K562 (cell line): ENCODE measurements at regions of chr21 and their contacts with region 1.

Region 1: GRCh38 chr21:45973659-45974072 is 7.9 kb upstream of the COL6A1 start:
- DNase-seq: peak; percentile 72 to 83 (median 82)
- ATAC-seq: peak; percentile 76
- H3K4me3 ChIP-seq: peak overlapping the region; percentile 14
- H3K27ac ChIP-seq: no peak overlapping the region
- H3K4me1 ChIP-seq: peaks cover 0 to 52% of the 10 kb centered on the region in 2 experiments; a peak in 4 of 5 replicates
- H3K27me3 ChIP-seq: peaks cover 29 to 44% of the 10 kb centered on the region in 2 experiments
- CTCF ChIP-seq: peak; percentile 71 to 81 (median 74)
- EP300 ChIP-seq: no peak
- POLR2A ChIP-seq: no peak
- RAD21 ChIP-seq: peak; percentile 38 to 67

Region 2: DNA sequence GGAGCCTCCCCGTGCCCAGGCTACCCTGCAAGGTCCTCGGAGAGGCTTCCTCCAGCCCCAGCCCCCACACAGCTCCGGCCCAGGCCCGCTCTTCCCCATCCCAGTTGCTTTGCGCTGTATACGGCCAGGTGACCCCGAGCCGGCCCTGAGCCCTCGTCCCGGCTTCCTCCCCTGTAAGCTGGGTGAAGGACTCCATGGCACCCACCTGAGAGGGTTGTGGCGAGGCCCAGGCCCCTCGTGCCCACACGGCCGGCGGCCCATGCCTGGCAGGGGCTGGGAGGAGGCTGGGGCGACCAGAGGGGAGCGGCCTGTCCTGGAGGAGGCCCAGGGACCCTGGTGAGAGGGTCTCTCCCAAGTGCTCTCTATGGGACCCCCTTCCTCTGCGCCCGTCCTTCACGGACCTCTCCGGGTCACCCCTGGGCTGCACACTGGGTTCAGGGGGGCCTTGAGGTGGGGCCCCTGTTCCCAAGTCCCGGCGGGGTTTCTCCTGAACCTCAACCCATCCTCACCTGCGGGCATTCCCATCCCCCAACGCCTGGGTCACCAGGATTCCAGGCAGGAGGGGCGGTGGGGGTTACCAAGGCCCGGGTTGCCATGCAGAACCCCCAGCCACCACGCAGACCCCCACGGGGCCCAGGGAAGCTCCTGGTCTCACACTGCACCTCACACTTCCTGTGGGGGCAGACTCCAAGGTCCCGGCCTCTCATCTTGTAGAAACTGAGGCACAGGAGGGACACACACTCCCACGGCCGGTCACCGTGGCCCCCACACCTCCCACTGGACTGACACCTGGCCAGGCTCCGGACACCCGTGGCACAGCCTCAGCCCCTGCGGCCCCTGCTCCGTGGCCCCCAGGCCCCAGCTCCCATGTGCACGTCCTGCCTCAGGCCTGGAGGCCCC is 33.1 kb after region 1 on chr21:
- CTCF ChIA-PET with region 1: no interaction called
- POLR2A ChIA-PET with region 1: no interaction called
- in situ Hi-C with region 1: no loop called
- intact Hi-C with region 1: no loop called
- DNase-seq: no peak
- ATAC-seq: no peak
- H3K4me3 ChIP-seq: no peak overlapping the region
- H3K27ac ChIP-seq: no peak overlapping the region
- H3K4me1 ChIP-seq: peaks cover 0 to 33% of the 10 kb centered on the region in 2 experiments; a peak in 1 of 5 replicates
- H3K27me3 ChIP-seq: peaks cover 3 to 47% of the 10 kb centered on the region in 2 experiments; a peak in 3 of 5 replicates
- CTCF ChIP-seq: no peak
- EP300 ChIP-seq: no peak
- POLR2A ChIP-seq: no peak
- RAD21 ChIP-seq: no peak

Region 3: GRCh38 chr21:46048926-46049889 is 75.5 kb after region 1 on chr21:
- CTCF ChIA-PET with region 1: no interaction called
- POLR2A ChIA-PET with region 1: no interaction called
- in situ Hi-C with region 1: no loop called
- intact Hi-C with region 1: loop called (anchors 10 kb)
- DNase-seq: no peak
- ATAC-seq: 0 out of 3 replicates have a peak, but pooled peaks have one; percentile 33
- H3K4me3 ChIP-seq: no peak overlapping the region
- H3K27ac ChIP-seq: no peak overlapping the region
- H3K4me1 ChIP-seq: peaks cover 0 to 20% of the 10 kb centered on the region in 2 experiments; a peak in 1 of 5 replicates
- H3K27me3 ChIP-seq: peaks cover 8 to 38% of the 10 kb centered on the region in 2 experiments; a peak in 4 of 5 replicates
- CTCF ChIP-seq: no peak
- EP300 ChIP-seq: no peak
- POLR2A ChIP-seq: no peak
- RAD21 ChIP-seq: no peak

Region 4: DNA sequence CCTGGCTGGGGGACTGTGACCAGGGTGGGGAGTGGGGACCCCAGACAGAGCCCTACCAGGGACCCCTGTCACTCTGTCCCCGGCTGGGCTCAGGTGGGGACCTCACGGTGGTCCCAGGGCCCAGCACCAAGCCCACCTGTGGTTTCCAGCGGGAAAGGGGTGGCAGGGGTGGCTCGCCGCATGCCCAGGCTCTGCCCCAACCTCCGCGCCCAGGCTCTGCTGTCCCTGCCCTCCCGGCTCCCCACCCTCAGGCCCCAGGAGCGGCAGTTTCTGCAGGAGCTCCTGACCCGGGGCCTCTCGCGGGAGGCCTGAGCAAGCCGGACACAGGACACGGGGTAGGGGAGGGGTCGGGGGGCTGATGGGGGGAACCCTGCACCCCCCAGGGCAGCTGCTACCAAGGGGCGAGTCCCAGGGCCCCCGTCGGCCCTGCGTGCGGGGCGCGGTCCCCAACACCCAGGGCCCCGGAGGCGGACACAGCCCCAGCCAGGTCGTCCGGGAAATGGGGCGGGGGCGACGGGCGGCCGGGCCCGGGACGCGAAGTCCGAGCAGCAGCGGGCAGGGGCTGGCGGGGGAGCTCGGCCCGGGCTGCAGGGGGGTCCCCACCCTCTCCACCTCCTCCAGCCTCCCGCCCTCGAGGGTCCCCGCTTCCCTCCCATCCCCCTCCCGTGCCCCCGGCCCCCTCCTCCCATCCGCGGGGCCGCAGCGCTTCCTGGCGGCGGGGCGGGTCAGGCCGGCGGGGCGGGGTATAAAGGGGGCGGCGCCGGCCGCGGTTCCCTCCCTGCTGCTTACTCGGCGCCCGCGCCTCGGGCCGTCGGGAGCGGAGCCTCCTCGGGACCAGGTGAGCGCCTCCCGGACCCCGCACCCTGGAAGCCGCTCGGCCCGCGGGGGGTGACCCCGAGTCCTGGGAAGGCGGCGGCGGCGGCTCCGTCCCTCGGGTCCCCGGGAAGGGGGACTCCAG is 123.9 kb after region 1 on chr21 and contains the start of gene COL6A2:
- CTCF ChIA-PET with region 1: interaction called, 3 read pairs
- POLR2A ChIA-PET with region 1: interaction called, 3 read pairs
- in situ Hi-C with region 1: no loop called
- intact Hi-C with region 1: loop called (anchors 5 kb)
- DNase-seq: peak; percentile 61 to 93 (median 90)
- ATAC-seq: peak; percentile 97
- H3K4me3 ChIP-seq: peak within 1 kb of the TSS; percentile 34
- H3K27ac ChIP-seq: no peak within 1 kb of the TSS
- H3K4me1 ChIP-seq: peaks cover 0 to 24% of the 10 kb centered on the region in 2 experiments; a peak in 2 of 5 replicates
- H3K27me3 ChIP-seq: peaks cover 21 to 54% of the 10 kb centered on the region in 2 experiments
- CTCF ChIP-seq: peak in 2 of 3 experiments; percentile 15 to 32; a peak in 4 of 6 replicates
- EP300 ChIP-seq: no peak
- POLR2A ChIP-seq: no peak
- RAD21 ChIP-seq: no peak
- polyA plus RNA-seq, gene COL6A2: not detected

Region 5: GRCh38 chr21:46144464-46145070 is 170.9 kb after region 1 on chr21:
- CTCF ChIA-PET with region 1: no interaction called
- POLR2A ChIA-PET with region 1: interaction called, 5 read pairs
- in situ Hi-C with region 1: no loop called
- intact Hi-C with region 1: loop called (anchors 5 kb)
- DNase-seq: no peak
- ATAC-seq: no peak
- H3K4me3 ChIP-seq: no peak overlapping the region
- H3K27ac ChIP-seq: no peak overlapping the region; the same call in 2 of the 3 replicates
- H3K4me1 ChIP-seq: peaks cover 5 to 43% of the 10 kb centered on the region in 2 experiments; a peak in 4 of 5 replicates
- H3K27me3 ChIP-seq: peaks cover 6 to 13% of the 10 kb centered on the region in 2 experiments; a peak in 4 of 5 replicates
- CTCF ChIP-seq: no peak
- EP300 ChIP-seq: no peak
- POLR2A ChIP-seq: no peak
- RAD21 ChIP-seq: no peak